AG04449 (cell line): ENCODE measurements at regions of chr4 and their contacts with region 1.

Region 1: DNA sequence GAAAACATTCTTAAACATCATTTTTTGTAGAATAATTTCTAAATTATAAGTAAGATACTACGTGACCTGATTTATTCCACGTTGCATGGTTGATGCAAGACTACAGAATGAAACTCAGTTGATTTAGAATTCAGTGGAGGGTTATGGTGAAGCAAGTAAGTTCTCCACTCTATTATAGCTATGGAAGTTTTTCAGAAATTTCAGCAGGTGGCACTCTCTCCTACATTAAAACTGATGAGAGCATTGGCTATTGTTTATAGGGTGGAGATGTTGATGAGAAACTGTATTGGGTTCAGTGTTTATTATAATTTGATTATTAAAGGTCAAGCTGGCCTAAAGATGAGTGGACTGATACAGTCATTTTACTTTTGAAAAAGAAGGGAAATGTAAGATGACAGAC is 88.0 kb downstream of the FNIP2 start:
- DNase-seq: no peak
- H3K4me3 ChIP-seq: no peak overlapping the region
- CTCF ChIP-seq: peak; percentile 30

Region 2: DNA sequence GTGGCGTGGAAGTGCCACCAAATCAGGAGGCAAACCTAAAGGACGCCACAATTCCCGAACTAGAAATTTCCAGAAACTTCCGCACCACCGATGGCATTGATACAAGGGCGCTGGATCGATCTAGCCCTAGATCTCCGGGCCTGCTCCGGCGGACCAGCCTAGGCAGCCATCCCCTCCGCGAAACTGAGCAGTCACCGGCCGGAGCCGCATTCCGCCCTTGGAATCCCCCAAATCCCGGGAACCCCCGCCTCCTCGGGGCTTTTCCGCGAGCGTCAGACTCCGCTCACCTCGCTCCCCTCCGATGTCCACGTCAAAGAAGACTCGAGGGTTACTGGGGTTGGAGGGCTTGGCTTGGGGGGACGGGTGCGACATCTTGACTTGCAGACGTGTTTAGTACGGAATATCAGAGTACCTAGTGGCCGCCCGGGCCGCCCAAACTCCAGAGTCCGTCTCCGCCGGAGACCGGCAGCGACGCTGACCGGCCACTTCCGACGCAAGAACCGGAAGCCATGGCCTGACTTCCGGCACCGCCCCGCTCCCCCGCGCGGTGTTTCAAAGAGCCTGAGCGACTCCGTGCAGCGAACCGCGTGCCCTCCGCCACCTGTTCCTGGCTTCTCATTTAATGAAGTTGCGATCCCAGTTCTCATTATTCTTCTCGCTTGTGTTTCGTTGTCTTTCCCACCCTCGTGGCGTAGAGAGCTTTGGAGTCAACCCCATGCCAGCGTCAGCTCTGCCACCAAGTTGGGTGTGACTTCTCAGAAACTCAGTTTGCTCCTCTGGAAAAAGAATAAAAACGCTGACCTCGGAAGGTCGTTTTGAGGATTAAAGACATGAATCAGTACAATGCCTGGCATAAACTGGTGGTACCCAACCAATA is 133.7 kb before region 1 on chr4 and contains the start of gene PPID:
- CTCF ChIA-PET with region 1: interaction called, 51 read pairs
- POLR2A ChIA-PET with region 1: no interaction called
- DNase-seq: no peak
- H3K4me3 ChIP-seq: peak within 1 kb of the TSS; percentile 79
- CTCF ChIP-seq: no peak

Region 3: GRCh38 chr4:158729716-158730559 is 126.9 kb before region 1 on chr4:
- CTCF ChIA-PET with region 1: interaction called, 51 read pairs
- POLR2A ChIA-PET with region 1: no interaction called
- DNase-seq: no peak
- H3K4me3 ChIP-seq: no peak overlapping the region
- CTCF ChIP-seq: peak; percentile 79

Region 4: DNA sequence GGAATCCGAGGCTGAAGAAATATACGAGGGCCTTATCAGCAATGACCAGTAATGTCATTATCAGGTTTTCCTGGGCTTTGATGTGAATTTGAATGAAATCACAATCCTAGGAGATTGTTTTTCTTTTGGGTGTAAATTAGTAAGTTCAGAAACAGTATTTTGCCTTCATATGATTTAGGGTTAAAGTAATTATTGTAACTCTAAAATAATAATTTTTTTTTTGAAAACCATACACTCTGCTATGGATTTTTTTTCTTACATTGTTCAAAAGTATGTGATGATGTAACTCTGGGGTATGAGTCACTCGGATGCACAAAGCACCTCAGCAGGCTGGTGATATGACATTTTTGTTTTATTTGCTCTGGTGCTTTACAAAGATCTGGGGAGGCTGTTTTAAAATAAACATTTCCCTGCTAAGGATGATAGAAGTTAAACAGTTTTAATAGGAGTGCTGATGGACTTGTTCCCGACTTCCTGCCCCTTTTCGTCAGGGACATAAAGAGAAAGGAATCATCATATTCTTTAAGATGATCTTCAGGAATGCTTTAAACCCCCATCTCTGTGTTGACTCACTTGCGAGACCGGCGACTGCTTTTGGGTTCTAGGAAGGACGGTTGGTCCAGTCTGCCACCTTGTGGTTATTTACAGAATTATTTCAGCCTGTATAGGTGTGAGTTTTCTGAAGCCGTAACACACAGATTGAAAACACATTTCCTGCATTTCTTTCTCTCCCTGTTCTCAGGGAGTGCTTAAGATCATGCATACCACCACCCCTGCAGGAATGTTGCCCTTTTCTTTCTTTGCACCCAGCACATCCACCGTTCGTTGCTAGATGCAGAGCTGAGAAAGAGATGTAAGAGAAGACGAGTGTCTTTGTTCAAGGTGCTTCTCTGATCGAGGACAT is 318.5 kb after region 1 on chr4:
- CTCF ChIA-PET with region 1: interaction called, 28 read pairs
- POLR2A ChIA-PET with region 1: no interaction called
- DNase-seq: peak; percentile 67
- H3K4me3 ChIP-seq: peak overlapping the region; percentile 27
- CTCF ChIP-seq: peak; percentile 50

Region 5: DNA sequence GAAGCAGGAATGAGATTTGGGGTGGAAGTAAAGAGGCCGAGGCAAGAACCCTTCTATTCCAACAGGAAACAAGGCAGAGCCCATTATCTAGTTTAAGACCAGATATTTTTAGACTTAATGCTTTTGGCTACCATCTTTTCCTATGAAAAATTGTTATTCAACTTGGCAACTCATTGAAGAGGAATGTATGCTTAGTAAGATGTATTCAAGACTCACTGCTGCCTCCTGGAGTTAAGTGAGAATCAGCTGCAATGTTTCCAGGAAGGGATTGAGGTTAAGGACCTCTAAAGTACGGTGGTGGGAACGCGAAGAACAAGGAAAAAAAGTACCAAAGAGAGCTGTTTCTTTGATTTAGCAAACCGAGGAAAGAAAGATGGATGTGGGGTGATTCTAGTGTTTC is 335.1 kb after region 1 on chr4:
- CTCF ChIA-PET with region 1: interaction called, 184 read pairs
- POLR2A ChIA-PET with region 1: no interaction called
- DNase-seq: no peak
- H3K4me3 ChIP-seq: no peak overlapping the region
- CTCF ChIP-seq: peak; percentile 33

Region 6: DNA sequence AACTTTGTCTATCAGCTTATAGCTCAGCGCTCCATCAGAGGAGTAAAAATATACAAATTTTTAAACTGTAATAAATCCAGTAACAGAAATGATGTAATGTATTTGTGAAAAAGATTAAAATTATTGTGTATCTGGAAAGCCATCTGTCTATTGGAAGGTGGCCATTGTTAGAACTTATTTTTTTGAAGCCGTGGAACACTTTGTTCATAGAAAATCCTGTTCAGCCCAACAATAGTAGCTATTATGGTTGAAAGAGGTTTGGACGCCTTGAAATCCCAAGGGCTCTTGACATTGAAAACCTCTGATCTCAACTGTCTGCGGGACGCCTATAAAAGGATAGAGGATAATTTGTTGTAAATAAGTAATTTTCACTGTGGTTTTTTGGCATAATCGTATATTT is 344.3 kb after region 1 on chr4:
- CTCF ChIA-PET with region 1: interaction called, 184 read pairs
- POLR2A ChIA-PET with region 1: no interaction called
- DNase-seq: no peak
- H3K4me3 ChIP-seq: no peak overlapping the region
- CTCF ChIP-seq: no peak

Region 7: DNA sequence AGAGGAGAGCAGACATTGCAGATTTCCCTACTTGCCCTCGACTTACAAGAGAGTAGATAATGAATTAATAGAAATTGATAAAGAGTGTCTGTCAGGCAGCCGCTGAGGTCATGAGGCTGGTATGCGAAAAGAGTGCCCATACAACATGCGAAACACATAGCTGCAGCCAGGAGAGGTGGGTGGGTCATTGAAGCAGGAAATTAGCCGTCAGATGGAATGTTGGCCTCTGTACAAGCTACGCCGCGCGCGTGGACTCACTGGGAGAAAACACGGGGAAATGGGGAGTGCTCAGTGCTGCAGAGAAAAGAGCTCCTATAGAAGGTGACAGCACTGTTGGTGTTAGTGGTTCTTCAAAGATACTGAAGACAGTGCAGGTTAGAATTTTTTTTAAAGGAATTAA is 371.1 kb after region 1 on chr4:
- CTCF ChIA-PET with region 1: no interaction called
- POLR2A ChIA-PET with region 1: no interaction called
- DNase-seq: peak; percentile 42
- H3K4me3 ChIP-seq: peak overlapping the region; percentile 26; the same call in 1 of the 2 replicates
- CTCF ChIP-seq: no peak